Naive thymus-derived CD4-positive, alpha-beta T cell (primary cell): ENCODE measurements at regions of chr16 and their contacts with region 1.

Region 1: GRCh38 chr16:84511180-84511824 is 6.8 kb upstream of the MEAK7 start:
- DNase-seq: peak; percentile 55 to 88 (median 79)
- ATAC-seq: peak; percentile 62
- H3K4me3 ChIP-seq: no peak overlapping the region
- H3K4me3 Mint-ChIP-seq: peak overlapping the region in 9 of 10 donors; percentile 11 to 71 (median 62)
- H3K27ac ChIP-seq: no peak overlapping the region
- H3K27ac Mint-ChIP-seq: peak overlapping the region; percentile 55 to 94 (median 82)
- H3K4me1 ChIP-seq: peaks cover 53 to 77% of the 10 kb centered on the region in 2 donors
- H3K4me1 Mint-ChIP-seq: peaks cover 48 to 79% (median 74%) of the 10 kb centered on the region in 7 donors
- H3K27me3 ChIP-seq: no peaks in the 10 kb centered on the region
- H3K27me3 Mint-ChIP-seq: no peaks in the 10 kb centered on the region

Region 2: DNA sequence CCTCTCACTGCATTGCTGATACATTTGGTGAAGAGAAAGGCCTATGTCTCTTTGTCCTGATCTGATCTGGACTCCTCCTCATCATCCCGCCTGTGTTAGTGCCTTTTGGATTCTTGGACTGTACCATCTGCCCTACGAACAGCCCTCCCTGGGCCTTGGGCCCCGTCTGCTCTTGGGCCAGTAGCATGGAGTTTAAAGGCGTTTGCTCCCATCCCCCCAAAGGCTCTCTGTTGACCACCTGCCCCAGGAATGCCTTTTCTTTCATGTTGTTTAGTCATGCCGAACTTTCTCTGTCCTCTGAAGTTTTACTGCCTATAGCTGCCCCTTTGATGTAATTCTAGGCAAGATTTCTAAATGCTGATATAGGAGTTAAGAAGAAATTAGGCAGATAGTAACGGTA is 24.1 kb after region 1 on chr16:
- CTCF ChIA-PET with region 1: no interaction called
- POLR2A ChIA-PET with region 1: no interaction called
- intact Hi-C with region 1: no loop called
- DNase-seq: no peak
- ATAC-seq: no peak
- H3K4me3 ChIP-seq: no peak overlapping the region
- H3K4me3 Mint-ChIP-seq: no peak overlapping the region
- H3K27ac ChIP-seq: no peak overlapping the region
- H3K27ac Mint-ChIP-seq: no peak overlapping the region
- H3K4me1 ChIP-seq: no peaks in the 10 kb centered on the region
- H3K4me1 Mint-ChIP-seq: peaks cover 6 to 45% (median 16%) of the 10 kb centered on the region in 7 donors
- H3K27me3 ChIP-seq: no peaks in the 10 kb centered on the region
- H3K27me3 Mint-ChIP-seq: no peaks in the 10 kb centered on the region

Region 3: GRCh38 chr16:84555418-84556195 is 44.3 kb after region 1 on chr16:
- CTCF ChIA-PET with region 1: interaction called, 8 read pairs
- POLR2A ChIA-PET with region 1: interaction called, 29 read pairs
- intact Hi-C with region 1: loop called in 1 of 2 experiments (anchors 1 kb)
- DNase-seq: peak in 5 of 9 donors; percentile 11 to 42 (median 34)
- ATAC-seq: no peak
- H3K4me3 ChIP-seq: no peak overlapping the region
- H3K4me3 Mint-ChIP-seq: peak overlapping the region in 6 of 10 donors; percentile 4 to 59 (median 32)
- H3K27ac ChIP-seq: peak overlapping the region; percentile 17
- H3K27ac Mint-ChIP-seq: peak overlapping the region in 8 of 9 donors; percentile 28 to 76 (median 66)
- H3K4me1 ChIP-seq: peaks cover 32 to 37% of the 10 kb centered on the region in 2 donors
- H3K4me1 Mint-ChIP-seq: peaks cover 13 to 52% (median 42%) of the 10 kb centered on the region in 7 donors
- H3K27me3 ChIP-seq: no peaks in the 10 kb centered on the region
- H3K27me3 Mint-ChIP-seq: no peaks in the 10 kb centered on the region

Region 4: GRCh38 chr16:84599521-84600202 is 88.4 kb after region 1 on chr16:
- CTCF ChIA-PET with region 1: interaction called, 11 read pairs
- POLR2A ChIA-PET with region 1: interaction called, 38 read pairs
- intact Hi-C with region 1: loop called (anchors 1 kb)
- DNase-seq: peak in 6 of 9 donors; percentile 41 to 78 (median 50)
- ATAC-seq: peak; percentile 39
- H3K4me3 ChIP-seq: peak overlapping the region; percentile 44
- H3K4me3 Mint-ChIP-seq: peak overlapping the region; percentile 78 to 94 (median 87)
- H3K27ac ChIP-seq: peak overlapping the region; percentile 87
- H3K27ac Mint-ChIP-seq: peak overlapping the region; percentile 90 to 98 (median 97)
- H3K4me1 ChIP-seq: peaks cover 82 to 90% of the 10 kb centered on the region in 2 donors
- H3K4me1 Mint-ChIP-seq: peaks cover 73 to 94% (median 88%) of the 10 kb centered on the region in 7 donors
- H3K27me3 ChIP-seq: no peaks in the 10 kb centered on the region
- H3K27me3 Mint-ChIP-seq: peaks cover 0 to 4% (median 0%) of the 10 kb centered on the region in 5 donors

Region 5: GRCh38 chr16:84970447-84971127 is 459.3 kb after region 1 on chr16:
- CTCF ChIA-PET with region 1: no interaction called
- POLR2A ChIA-PET with region 1: no interaction called
- intact Hi-C with region 1: loop called in 1 of 2 experiments (anchors 2 kb)
- DNase-seq: peak; percentile 60 to 79 (median 74)
- ATAC-seq: peak; percentile 92
- H3K4me3 ChIP-seq: no peak overlapping the region
- H3K4me3 Mint-ChIP-seq: no peak overlapping the region
- H3K27ac ChIP-seq: no peak overlapping the region
- H3K27ac Mint-ChIP-seq: peak overlapping the region in 3 of 9 donors; percentile 9 to 78 (median 46)
- H3K4me1 ChIP-seq: peaks cover 0 to 6% of the 10 kb centered on the region in 2 donors
- H3K4me1 Mint-ChIP-seq: peaks cover 0 to 8% (median 4%) of the 10 kb centered on the region in 7 donors
- H3K27me3 ChIP-seq: no peaks in the 10 kb centered on the region
- H3K27me3 Mint-ChIP-seq: no peaks in the 10 kb centered on the region